HepG2 (cell line): ENCODE measurements at regions of chr11 and their contacts with region 1.

Region 1: DNA sequence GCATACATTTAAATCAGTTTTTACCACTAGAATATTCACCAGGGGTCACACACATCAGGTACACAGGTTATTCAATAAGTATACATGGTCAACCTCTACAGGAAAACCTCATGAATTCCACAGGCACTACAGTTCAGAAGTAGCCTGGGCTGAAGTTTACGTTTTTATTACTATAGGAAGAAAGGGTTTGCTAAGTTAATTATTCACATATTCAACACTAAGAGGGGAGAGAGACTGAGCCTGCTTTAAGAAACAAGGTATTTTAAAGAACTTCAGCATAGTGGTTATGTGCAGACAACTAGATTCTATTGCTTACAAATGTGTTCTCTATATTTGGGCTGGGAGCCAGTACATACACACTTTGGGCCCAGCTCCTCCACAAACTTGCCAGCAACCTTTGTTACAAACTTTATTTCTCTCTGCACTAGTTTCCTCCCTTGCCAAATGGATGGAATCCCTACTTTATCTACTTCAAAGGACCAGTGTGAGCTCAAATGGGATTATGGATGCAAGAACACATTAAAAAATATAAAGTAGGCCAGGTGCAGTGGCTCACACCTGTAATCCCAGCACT is 31.9 kb downstream of the IL18BP start:
- DNase-seq: no peak
- ATAC-seq: no peak
- H3K4me3 ChIP-seq: no peak overlapping the region
- H3K27ac ChIP-seq: no peak overlapping the region
- H3K4me1 ChIP-seq: no peaks in the 10 kb centered on the region
- H3K27me3 ChIP-seq: no peaks in the 10 kb centered on the region
- CTCF ChIP-seq: no peak
- EP300 ChIP-seq: no peak
- POLR2A ChIP-seq: no peak
- RAD21 ChIP-seq: no peak

Region 2: GRCh38 chr11:71962428-71963038 is 68.0 kb before region 1 on chr11:
- CTCF ChIA-PET with region 1: no interaction called
- POLR2A ChIA-PET with region 1: no interaction called
- in situ Hi-C with region 1: no loop called
- intact Hi-C with region 1: no loop called
- DNase-seq: no peak
- ATAC-seq: no peak
- H3K4me3 ChIP-seq: no peak overlapping the region
- H3K27ac ChIP-seq: peak overlapping the region; percentile 33
- H3K4me1 ChIP-seq: peaks cover 6% of the 10 kb centered on the region; the same call in 1 of the 2 replicates
- H3K27me3 ChIP-seq: no peaks in the 10 kb centered on the region
- CTCF ChIP-seq: no peak
- EP300 ChIP-seq: no peak
- POLR2A ChIP-seq: no peak
- RAD21 ChIP-seq: no peak

Region 3: DNA sequence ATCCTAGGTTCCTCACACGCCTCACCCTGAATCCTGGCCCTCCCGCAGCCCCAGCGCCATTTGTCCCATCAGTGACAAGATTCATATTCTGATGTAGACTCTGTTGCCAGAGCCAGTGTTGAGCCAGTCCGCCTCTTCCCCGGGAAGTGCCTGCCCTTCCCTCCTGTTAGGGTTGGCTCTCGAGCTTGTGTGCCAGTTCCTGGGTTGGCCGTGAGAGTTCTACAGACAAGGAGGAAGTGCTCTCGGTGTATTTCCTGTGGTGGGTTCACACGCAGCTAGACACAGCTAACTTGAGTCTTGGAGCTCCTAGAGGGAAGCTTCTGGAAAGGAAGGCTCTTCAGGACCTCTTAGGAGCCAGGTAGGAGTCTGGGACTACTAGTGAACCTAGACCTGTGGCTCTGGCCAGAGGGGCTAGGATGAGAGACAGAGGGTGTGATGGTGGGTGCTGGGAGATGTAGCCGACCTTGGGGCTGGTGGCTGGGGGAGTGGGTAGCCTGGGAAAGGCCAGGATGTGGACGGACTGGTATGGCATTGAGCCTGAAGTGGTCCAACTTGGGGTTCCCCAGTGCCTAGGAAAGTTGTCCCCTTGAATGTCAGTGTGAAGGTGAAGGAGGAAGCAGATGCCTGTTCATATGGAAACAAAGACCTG is 31.8 kb before region 1 on chr11 and contains the start of gene IL18BP:
- CTCF ChIA-PET with region 1: no interaction called
- POLR2A ChIA-PET with region 1: no interaction called
- in situ Hi-C with region 1: no loop called
- intact Hi-C with region 1: no loop called
- DNase-seq: no peak
- ATAC-seq: no peak
- H3K4me3 ChIP-seq: no peak within 1 kb of the TSS
- H3K27ac ChIP-seq: no peak within 1 kb of the TSS
- H3K4me1 ChIP-seq: no peaks in the 10 kb centered on the region
- H3K27me3 ChIP-seq: no peaks in the 10 kb centered on the region
- CTCF ChIP-seq: no peak
- EP300 ChIP-seq: no peak
- POLR2A ChIP-seq: no peak
- RAD21 ChIP-seq: no peak
- total RNA-seq, gene IL18BP: 1.0 and 4.1 TPM in 2 replicates

Region 4: GRCh38 chr11:72040726-72041441 is 10.3 kb after region 1 on chr11:
- CTCF ChIA-PET with region 1: no interaction called
- POLR2A ChIA-PET with region 1: interaction called, 19 read pairs
- in situ Hi-C with region 1: no loop called
- intact Hi-C with region 1: no loop called
- DNase-seq: peak; percentile 88
- ATAC-seq: peak; percentile 85
- H3K4me3 ChIP-seq: peak overlapping the region; percentile 56 to 77 (median 62)
- H3K27ac ChIP-seq: peak overlapping the region; percentile 86
- H3K4me1 ChIP-seq: peaks cover 54% of the 10 kb centered on the region
- H3K27me3 ChIP-seq: no peaks in the 10 kb centered on the region; a peak in 1 of 5 replicates
- CTCF ChIP-seq: peak; percentile 28; the same call in 1 of the 2 replicates
- EP300 ChIP-seq: no peak
- POLR2A ChIP-seq: peak in 1 of 2 experiments; percentile 44; a peak in 2 of 4 replicates
- RAD21 ChIP-seq: no peak

Region 5: GRCh38 chr11:72091005-72091691 is 60.6 kb after region 1 on chr11:
- CTCF ChIA-PET with region 1: interaction called, 67 read pairs
- POLR2A ChIA-PET with region 1: interaction called, 4 read pairs
- in situ Hi-C with region 1: loop called (anchors 5 kb)
- intact Hi-C with region 1: loop called (anchors 1 kb)
- DNase-seq: peak; percentile 68
- ATAC-seq: peak; percentile 94
- H3K4me3 ChIP-seq: no peak overlapping the region
- H3K27ac ChIP-seq: no peak overlapping the region
- H3K4me1 ChIP-seq: peaks cover 17% of the 10 kb centered on the region
- H3K27me3 ChIP-seq: no peaks in the 10 kb centered on the region
- CTCF ChIP-seq: peak; percentile 92
- EP300 ChIP-seq: no peak
- POLR2A ChIP-seq: peak in 1 of 2 experiments; percentile 20; a peak in 1 of 4 replicates
- RAD21 ChIP-seq: peak; percentile 58

Region 6: DNA sequence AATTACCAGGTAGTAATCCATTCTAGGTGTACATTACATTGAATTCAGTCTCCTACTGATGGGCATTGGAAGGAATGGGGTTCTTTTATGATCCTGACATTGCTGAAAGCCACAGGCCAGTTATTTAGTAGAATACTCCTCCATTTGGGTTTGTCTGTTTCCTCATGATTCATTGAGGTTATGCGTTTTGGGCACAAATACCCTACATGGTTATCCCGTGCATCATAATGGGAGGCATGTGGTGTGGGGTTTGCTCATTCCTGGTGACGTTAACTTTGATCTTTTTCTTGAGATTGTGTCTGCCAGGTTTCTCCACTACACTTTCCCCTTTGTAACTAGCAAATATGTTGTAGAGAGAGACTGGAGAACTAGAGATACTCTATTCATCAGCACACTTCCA is 110.5 kb after region 1 on chr11:
- CTCF ChIA-PET with region 1: interaction called, 7 read pairs
- POLR2A ChIA-PET with region 1: no interaction called
- in situ Hi-C with region 1: no loop called
- intact Hi-C with region 1: loop called (anchors 1 kb)
- DNase-seq: no peak
- ATAC-seq: no peak
- H3K4me3 ChIP-seq: no peak overlapping the region
- H3K27ac ChIP-seq: no peak overlapping the region
- H3K4me1 ChIP-seq: no peaks in the 10 kb centered on the region
- H3K27me3 ChIP-seq: peaks cover 0 to 1% of the 10 kb centered on the region in 2 experiments; a peak in 2 of 5 replicates
- CTCF ChIP-seq: no peak
- EP300 ChIP-seq: no peak
- POLR2A ChIP-seq: no peak
- RAD21 ChIP-seq: no peak

Region 7: GRCh38 chr11:72179804-72180396 is 149.3 kb after region 1 on chr11:
- CTCF ChIA-PET with region 1: no interaction called
- POLR2A ChIA-PET with region 1: no interaction called
- in situ Hi-C with region 1: no loop called
- intact Hi-C with region 1: loop called (anchors 1 kb)
- DNase-seq: no peak
- ATAC-seq: no peak
- H3K4me3 ChIP-seq: no peak overlapping the region
- H3K27ac ChIP-seq: no peak overlapping the region
- H3K4me1 ChIP-seq: peaks cover 5% of the 10 kb centered on the region
- H3K27me3 ChIP-seq: no peaks in the 10 kb centered on the region; a peak in 1 of 5 replicates
- CTCF ChIP-seq: no peak
- EP300 ChIP-seq: no peak
- POLR2A ChIP-seq: no peak
- RAD21 ChIP-seq: no peak

Region 8: GRCh38 chr11:72278911-72279310 is 248.4 kb after region 1 on chr11:
- CTCF ChIA-PET with region 1: no interaction called
- POLR2A ChIA-PET with region 1: no interaction called
- in situ Hi-C with region 1: no loop called
- intact Hi-C with region 1: no loop called
- DNase-seq: no peak
- ATAC-seq: no peak
- H3K4me3 ChIP-seq: no peak overlapping the region
- H3K27ac ChIP-seq: no peak overlapping the region
- H3K4me1 ChIP-seq: no peaks in the 10 kb centered on the region
- H3K27me3 ChIP-seq: no peaks in the 10 kb centered on the region; a peak in 1 of 5 replicates
- CTCF ChIP-seq: no peak
- EP300 ChIP-seq: no peak
- POLR2A ChIP-seq: no peak
- RAD21 ChIP-seq: no peak